ENCODE measurements at regions of chr7 and their contacts with region 1.

Region 1: DNA sequence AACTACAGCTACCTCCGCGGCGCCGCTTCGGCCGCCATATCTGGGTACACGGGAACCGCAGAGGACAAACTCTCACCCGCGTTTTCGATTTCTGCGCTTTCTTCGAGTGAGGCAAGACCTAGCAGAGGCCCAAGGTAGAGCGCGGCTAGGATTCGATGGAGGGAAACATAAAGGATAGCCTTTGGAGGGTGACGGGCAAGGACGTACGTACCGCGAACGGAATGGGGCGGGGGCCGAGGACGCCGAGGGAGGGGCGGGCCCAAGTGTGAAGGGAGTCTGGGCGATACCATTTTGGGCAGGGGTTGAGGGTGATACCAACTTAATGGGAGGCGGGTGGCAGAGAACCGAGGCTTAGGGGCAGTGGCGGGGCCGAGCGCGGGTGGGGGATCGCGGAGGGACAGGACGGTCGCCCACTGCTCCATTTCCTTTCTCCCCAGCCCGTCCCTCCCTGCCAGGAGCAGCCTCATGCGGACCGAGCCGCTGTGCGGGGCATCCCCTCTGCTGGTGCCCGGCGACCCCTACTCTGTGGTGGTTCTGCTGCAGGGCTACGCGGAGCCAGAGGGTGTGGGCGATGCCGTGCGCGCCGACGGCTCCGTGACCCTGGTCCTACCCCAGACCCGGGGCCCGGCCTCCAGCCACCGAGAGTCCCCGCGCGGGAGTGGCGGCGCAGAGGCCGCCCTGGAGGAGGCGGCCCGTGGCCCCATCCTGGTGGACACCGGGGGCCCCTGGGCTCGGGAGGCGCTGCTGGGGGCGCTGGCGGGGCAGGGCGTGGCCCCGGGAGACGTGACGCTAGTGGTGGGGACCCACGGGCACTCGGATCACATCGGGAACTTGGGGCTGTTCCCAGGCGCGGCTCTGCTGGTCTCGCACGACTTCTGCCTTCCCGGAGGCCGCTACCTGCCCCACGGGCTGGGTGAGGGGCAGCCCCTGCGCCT is at the start of gene MBLAC1:
- DNase-seq: peak; percentile 26
- H3K4me3 ChIP-seq: peak within 1 kb of the TSS; percentile 77
- H3K27me3 ChIP-seq: no peaks in the 10 kb centered on the region
- CTCF ChIP-seq: 0 out of 2 replicates have a peak, but pooled peaks have one; percentile 1
- polyA plus RNA-seq, gene MBLAC1: 1.2 and 1.6 TPM in 2 replicates

Region 2: DNA sequence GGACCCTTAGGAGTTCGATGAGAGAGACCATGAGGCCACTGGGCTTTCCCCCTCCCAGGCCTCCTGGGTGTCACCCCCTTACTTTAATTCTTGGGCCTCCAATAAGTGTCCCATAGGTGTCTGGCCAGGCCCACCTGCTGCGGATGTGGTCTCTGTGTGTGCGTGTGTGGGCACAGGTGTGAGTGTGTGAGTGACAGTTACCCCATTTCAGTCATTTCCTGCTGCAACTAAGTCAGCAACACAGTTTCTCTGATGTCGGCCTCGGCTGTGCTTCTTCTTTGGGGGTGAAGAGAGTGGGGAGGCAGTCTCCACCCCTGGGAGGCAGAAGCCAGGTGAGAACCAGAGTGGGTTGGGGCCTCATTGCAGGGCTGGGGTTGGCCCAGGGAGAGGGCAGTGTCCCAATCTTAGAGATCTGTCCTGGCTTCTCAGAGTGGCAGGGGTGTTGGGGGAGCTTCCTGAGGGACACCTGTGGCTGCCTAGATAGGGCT is 94.1 kb after region 1 on chr7:
- CTCF ChIA-PET with region 1: interaction called, 147 read pairs
- POLR2A ChIA-PET with region 1: no interaction called
- DNase-seq: no peak
- H3K4me3 ChIP-seq: no peak overlapping the region
- H3K27me3 ChIP-seq: no peaks in the 10 kb centered on the region
- CTCF ChIP-seq: no peak

Region 3: GRCh38 chr7:100604028-100604975 is 477.1 kb after region 1 on chr7:
- CTCF ChIA-PET with region 1: no interaction called
- POLR2A ChIA-PET with region 1: no interaction called
- DNase-seq: no peak
- H3K4me3 ChIP-seq: peak overlapping the region; percentile 46
- H3K27me3 ChIP-seq: no peaks in the 10 kb centered on the region
- CTCF ChIP-seq: peak; percentile 64